H1 (cell line): ENCODE measurements at regions of chr7 and their contacts with region 1.

Region 1: GRCh38 chr7:140176811-140177702 is at the start of gene KDM7A:
- DNase-seq: peak; percentile 47 to 82
- H3K4me3 ChIP-seq: peak within 1 kb of the TSS; percentile 65 to 93 (median 86)
- H3K27ac ChIP-seq: 0 out of 2 replicates have a peak within 1 kb of the TSS, but pooled peaks have one; percentile 40
- H3K4me1 ChIP-seq: peaks cover 0 to 2% (median 0%) of the 10 kb centered on the region in 4 experiments; a peak in 2 of 7 replicates
- H3K27me3 ChIP-seq: peaks cover 0 to 21% (median 13%) of the 10 kb centered on the region in 4 experiments; a peak in 5 of 7 replicates
- CTCF ChIP-seq: no peak
- EP300 ChIP-seq: no peak
- POLR2A ChIP-seq: peak in 1 of 2 experiments; percentile 56; a peak in 2 of 3 replicates
- RAD21 ChIP-seq: no peak
- total RNA-seq, gene KDM7A: 11.6 and 12.5 TPM in 2 replicates

Region 2: DNA sequence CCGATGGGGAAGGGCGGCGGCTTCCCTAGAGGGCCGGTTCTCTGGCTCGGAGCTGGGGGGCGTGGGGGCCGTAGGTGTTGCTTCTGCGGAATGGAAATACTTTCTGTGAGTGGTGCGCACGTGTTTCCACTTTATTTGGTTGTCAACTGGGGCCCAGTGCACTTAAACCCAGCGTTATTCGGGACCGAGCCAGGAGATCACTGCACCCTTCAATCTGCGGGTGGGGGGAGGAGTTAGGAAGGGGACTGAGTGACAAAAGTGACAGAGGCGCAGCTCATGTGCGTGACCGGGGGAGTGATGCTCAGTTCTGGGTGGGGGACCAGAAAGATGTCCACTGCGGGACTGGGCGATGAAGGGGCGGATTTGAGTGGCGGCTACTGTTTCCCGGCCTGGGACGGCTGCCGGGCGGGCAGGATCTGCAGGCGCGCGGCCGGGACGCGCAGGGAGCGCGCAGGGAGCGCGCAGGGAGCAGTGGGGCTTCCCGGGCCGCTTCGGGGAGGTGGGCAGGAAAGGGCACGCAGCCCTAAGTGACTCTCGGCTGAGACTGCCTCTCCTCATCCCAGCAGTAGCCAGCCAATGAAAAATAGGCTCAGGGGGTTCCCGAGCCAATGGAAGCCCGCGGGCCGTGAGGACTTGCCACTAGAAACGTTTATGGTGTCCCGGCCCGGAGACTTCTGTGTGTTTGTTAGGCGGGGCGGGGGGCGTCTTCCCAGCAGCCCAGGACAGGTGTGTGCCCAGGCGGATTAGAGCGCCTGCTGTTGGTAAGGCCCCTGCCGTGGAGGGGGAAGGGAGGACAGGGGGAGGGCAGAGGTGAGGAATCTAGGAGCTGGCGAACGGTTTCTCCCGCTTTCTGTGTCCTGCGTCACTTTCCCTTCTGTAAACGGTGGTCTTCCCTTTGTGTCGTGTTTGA is 54.1 kb after region 1 on chr7:
- CTCF ChIA-PET with region 1: interaction called, 4 read pairs
- POLR2A ChIA-PET with region 1: interaction called, 19 read pairs
- DNase-seq: peak; percentile 71 to 88
- H3K4me3 ChIP-seq: peak overlapping the region; percentile 48 to 71 (median 68)
- H3K27ac ChIP-seq: no peak overlapping the region; the same call in 1 of the 2 replicates
- H3K4me1 ChIP-seq: peaks cover 5 to 9% (median 6%) of the 10 kb centered on the region in 4 experiments; a peak in 6 of 7 replicates
- H3K27me3 ChIP-seq: peaks cover 0 to 8% (median 4%) of the 10 kb centered on the region in 4 experiments; a peak in 4 of 7 replicates
- CTCF ChIP-seq: peak in 2 of 3 experiments; percentile 8 to 23; a peak in 2 of 4 replicates
- EP300 ChIP-seq: peak in 1 of 2 experiments; percentile 28; a peak in 1 of 3 replicates
- POLR2A ChIP-seq: no peak
- RAD21 ChIP-seq: peak; percentile 14 to 24; a peak in 2 of 4 replicates